ENCODE measurements at regions of chr19 and their contacts with region 1.

Region 1: DNA sequence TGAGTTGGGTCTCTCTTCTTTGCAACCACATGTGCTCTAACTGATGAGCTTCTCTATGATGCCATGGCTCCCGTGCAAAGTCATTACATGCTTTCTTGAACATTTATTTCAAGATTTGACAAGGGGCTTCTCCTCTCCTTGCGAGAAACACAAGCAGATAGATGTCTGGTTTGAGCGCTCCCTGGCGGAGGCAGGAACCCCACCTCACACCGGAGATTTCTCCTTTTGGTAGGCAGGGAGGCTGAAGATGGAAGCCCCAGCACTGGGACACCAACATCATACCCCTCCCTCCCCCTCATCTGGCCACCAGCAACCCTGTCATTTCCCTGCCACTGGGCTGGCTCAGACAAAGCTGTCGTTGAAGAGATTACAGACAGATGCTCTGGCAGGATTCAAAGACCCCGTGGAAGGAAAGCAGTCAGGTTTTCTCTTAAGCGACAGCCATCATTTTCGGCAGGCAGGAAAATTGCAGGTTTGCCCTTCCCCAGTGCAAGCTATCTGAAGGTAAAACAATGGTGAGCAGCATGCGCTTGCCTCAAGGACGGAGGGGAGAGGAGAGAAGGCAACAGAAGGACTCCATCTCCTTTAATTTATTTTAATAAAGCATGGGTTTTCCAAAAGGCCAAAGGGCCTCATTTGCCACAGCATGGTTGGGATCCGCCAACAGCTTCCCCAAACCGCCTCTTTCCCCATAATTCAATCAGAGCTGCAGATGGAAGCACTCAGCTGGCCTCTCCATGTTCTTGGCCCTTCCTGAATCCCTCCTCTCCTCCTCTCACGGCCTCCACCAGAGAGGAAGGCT is 344.1 kb upstream of the TSHZ3 start:
- DNase-seq: no peak
- ATAC-seq: no peak
- H3K4me3 ChIP-seq: no peak overlapping the region
- H3K27ac ChIP-seq: no peak overlapping the region
- H3K4me1 ChIP-seq: no peaks in the 10 kb centered on the region
- H3K27me3 ChIP-seq: no peaks in the 10 kb centered on the region
- CTCF ChIP-seq: no peak

Region 2: DNA sequence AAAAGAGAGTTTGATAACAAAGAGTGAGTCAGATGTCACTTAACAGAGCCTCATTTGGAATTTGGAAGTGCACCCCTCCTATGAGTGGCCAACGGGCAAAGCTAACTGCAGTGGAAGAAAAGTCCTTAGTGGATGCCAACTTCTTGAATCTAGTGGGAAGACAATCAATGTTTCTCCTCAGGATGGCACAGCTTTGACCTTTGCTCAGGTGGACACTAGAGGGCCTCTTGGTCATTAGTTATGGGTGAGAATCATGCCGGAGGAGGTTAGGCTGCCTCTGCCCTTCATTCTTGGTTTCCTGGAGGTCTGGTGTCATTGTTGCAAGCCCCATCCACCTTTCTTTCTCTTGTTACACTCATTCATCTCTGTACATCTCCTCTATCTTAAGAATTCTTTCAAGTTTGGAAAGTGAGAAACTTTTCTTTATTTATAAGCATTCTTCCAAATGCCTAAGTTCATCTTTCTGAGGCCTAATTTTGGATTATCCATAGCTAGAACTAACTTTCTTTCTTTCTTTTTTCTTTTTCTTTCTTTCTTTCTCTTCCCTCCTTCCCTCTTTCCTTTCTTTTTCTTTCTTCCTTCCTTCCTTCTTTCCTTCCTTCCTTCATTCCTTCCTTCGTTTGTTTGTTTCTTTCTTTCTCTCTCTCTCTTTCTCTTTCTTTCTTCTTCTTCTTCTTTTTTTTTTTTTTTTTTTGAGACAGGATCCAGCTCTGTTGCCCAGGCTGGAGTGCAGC is 16.9 kb before region 1 on chr19:
- CTCF ChIA-PET with region 1: no interaction called
- POLR2A ChIA-PET with region 1: interaction called, 11 read pairs
- in situ Hi-C with region 1: no loop called
- intact Hi-C with region 1: no loop called
- DNase-seq: no peak
- ATAC-seq: 0 out of 2 replicates have a peak, but pooled peaks have one; percentile 60
- H3K4me3 ChIP-seq: no peak overlapping the region
- H3K27ac ChIP-seq: no peak overlapping the region
- H3K4me1 ChIP-seq: no peaks in the 10 kb centered on the region
- H3K27me3 ChIP-seq: no peaks in the 10 kb centered on the region; the same call in 1 of the 2 replicates
- CTCF ChIP-seq: peak; percentile 71

Measured in Panc1 (cell line).